B cell (primary cell): ENCODE measurements at regions of chr13 and their contacts with region 1.

Region 1: DNA sequence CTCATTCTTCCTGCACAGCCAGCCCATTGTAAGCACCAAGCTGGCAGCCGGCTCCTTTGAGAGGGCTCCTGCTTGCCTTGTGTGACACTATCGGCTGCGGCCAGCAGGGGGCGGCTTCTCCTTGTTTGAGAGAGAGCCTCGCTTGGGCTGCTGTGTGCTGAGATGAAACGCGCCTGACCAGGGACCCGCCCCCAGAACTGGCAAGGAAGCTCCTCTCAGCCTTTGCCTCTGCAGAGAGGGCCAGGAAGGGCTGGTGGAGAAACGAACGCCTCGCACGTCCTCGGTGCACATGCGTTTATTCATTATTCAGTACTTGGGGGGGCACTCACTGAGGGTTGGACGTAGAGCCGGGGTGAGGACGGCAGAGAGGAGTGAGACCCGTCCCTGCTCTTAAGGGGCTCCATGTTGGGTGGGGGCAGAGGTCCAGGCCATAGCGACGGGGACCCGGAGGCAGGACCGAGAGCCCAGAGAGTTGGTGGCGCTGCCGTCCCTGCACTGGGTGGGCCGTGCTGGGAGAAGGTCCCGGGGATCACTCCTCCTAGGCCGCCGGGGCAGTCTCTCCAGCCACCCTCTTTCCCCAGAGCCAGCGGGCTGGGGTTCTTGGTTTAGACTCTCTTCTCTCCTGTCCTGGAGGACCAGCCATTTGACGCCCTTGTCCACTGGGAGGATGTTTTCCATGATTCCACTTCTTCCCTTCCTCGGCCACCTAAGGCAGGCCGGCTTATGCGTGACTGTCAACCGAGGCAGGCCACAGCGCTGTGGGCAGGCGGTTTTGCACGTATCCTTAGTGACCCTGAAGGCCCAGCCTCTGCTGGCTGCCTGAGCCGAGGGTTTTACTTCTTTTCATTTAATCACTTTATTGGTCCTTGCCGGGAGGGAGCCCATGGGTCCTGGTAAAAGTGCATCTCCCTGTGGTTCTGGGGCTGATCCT is 174.5 kb downstream of the KATNAL1 start:
- DNase-seq: peak; percentile 91
- ATAC-seq: peak; percentile 100
- H3K4me3 ChIP-seq: no peak overlapping the region
- H3K4me3 Mint-ChIP-seq: peak overlapping the region; percentile 69
- H3K27ac ChIP-seq: no peak overlapping the region
- H3K27ac Mint-ChIP-seq: no peak overlapping the region
- H3K4me1 ChIP-seq: peaks cover 4% of the 10 kb centered on the region in 2 donors
- H3K4me1 Mint-ChIP-seq: peaks cover 5% of the 10 kb centered on the region
- H3K27me3 ChIP-seq: no peaks in the 10 kb centered on the region
- H3K27me3 Mint-ChIP-seq: peaks cover under 1% of the 10 kb centered on the region
- CTCF ChIP-seq: peak; percentile 97

Region 2: GRCh38 chr13:30114571-30115256 is 18.2 kb before region 1 on chr13:
- CTCF ChIA-PET with region 1: interaction called, 59 read pairs
- POLR2A ChIA-PET with region 1: no interaction called
- intact Hi-C with region 1: loop called (anchors 2 kb)
- DNase-seq: peak; percentile 92
- ATAC-seq: peak; percentile 93
- H3K4me3 ChIP-seq: peak overlapping the region; percentile 32 to 72 (median 47)
- H3K4me3 Mint-ChIP-seq: peak overlapping the region; percentile 84
- H3K27ac ChIP-seq: no peak overlapping the region
- H3K27ac Mint-ChIP-seq: peak overlapping the region; percentile 66
- H3K4me1 ChIP-seq: peaks cover 6 to 23% of the 10 kb centered on the region in 2 donors
- H3K4me1 Mint-ChIP-seq: peaks cover 28% of the 10 kb centered on the region
- H3K27me3 ChIP-seq: peaks cover 0 to 5% (median 2%) of the 10 kb centered on the region in 4 experiments
- H3K27me3 Mint-ChIP-seq: peaks cover 21% of the 10 kb centered on the region
- CTCF ChIP-seq: peak; percentile 89

Region 3: GRCh38 chr13:30306762-30307193 is 173.9 kb after region 1 on chr13:
- CTCF ChIA-PET with region 1: interaction called, 3 read pairs
- POLR2A ChIA-PET with region 1: no interaction called
- intact Hi-C with region 1: loop called (anchors 5 kb)
- DNase-seq: peak; percentile 96
- ATAC-seq: peak; percentile 89
- H3K4me3 ChIP-seq: peak overlapping the region; percentile 70 to 97 (median 83)
- H3K4me3 Mint-ChIP-seq: peak overlapping the region; percentile 85
- H3K27ac ChIP-seq: peak overlapping the region; percentile 71 to 87
- H3K27ac Mint-ChIP-seq: peak overlapping the region; percentile 86
- H3K4me1 ChIP-seq: peaks cover 28 to 45% of the 10 kb centered on the region in 2 donors
- H3K4me1 Mint-ChIP-seq: peaks cover 55% of the 10 kb centered on the region
- H3K27me3 ChIP-seq: no peaks in the 10 kb centered on the region
- H3K27me3 Mint-ChIP-seq: no peaks in the 10 kb centered on the region
- CTCF ChIP-seq: no peak

Region 4: GRCh38 chr13:30465585-30466357 is 332.9 kb after region 1 on chr13 and contains the start of gene HMGB1:
- CTCF ChIA-PET with region 1: interaction called, 38 read pairs
- POLR2A ChIA-PET with region 1: interaction called, 3 read pairs
- intact Hi-C with region 1: loop called (anchors 1 kb)
- DNase-seq: peak; percentile 97
- ATAC-seq: peak; percentile 82
- H3K4me3 ChIP-seq: peak within 1 kb of the TSS; percentile 21 to 86 (median 78)
- H3K4me3 Mint-ChIP-seq: peak within 1 kb of the TSS; percentile 98
- H3K27ac ChIP-seq: peak within 1 kb of the TSS; percentile 54 to 91
- H3K27ac Mint-ChIP-seq: peak within 1 kb of the TSS; percentile 100
- H3K4me1 ChIP-seq: peaks cover 33 to 38% of the 10 kb centered on the region in 2 donors
- H3K4me1 Mint-ChIP-seq: peaks cover 38% of the 10 kb centered on the region
- H3K27me3 ChIP-seq: no peaks in the 10 kb centered on the region
- H3K27me3 Mint-ChIP-seq: no peaks in the 10 kb centered on the region
- CTCF ChIP-seq: no peak
- total RNA-seq, gene HMGB1: 483 and 529 TPM in 2 replicates

Region 5: GRCh38 chr13:30581582-30581981 is 448.7 kb after region 1 on chr13:
- CTCF ChIA-PET with region 1: interaction called, 49 read pairs
- POLR2A ChIA-PET with region 1: no interaction called
- intact Hi-C with region 1: loop called (anchors 1 kb)
- DNase-seq: peak; percentile 40
- ATAC-seq: no peak
- H3K4me3 ChIP-seq: no peak overlapping the region
- H3K4me3 Mint-ChIP-seq: no peak overlapping the region
- H3K27ac ChIP-seq: no peak overlapping the region
- H3K27ac Mint-ChIP-seq: no peak overlapping the region
- H3K4me1 ChIP-seq: no peaks in the 10 kb centered on the region
- H3K4me1 Mint-ChIP-seq: peaks cover 9% of the 10 kb centered on the region
- H3K27me3 ChIP-seq: peaks cover 0 to 3% (median 0%) of the 10 kb centered on the region in 4 experiments
- H3K27me3 Mint-ChIP-seq: no peaks in the 10 kb centered on the region
- CTCF ChIP-seq: no peak

Region 6: DNA sequence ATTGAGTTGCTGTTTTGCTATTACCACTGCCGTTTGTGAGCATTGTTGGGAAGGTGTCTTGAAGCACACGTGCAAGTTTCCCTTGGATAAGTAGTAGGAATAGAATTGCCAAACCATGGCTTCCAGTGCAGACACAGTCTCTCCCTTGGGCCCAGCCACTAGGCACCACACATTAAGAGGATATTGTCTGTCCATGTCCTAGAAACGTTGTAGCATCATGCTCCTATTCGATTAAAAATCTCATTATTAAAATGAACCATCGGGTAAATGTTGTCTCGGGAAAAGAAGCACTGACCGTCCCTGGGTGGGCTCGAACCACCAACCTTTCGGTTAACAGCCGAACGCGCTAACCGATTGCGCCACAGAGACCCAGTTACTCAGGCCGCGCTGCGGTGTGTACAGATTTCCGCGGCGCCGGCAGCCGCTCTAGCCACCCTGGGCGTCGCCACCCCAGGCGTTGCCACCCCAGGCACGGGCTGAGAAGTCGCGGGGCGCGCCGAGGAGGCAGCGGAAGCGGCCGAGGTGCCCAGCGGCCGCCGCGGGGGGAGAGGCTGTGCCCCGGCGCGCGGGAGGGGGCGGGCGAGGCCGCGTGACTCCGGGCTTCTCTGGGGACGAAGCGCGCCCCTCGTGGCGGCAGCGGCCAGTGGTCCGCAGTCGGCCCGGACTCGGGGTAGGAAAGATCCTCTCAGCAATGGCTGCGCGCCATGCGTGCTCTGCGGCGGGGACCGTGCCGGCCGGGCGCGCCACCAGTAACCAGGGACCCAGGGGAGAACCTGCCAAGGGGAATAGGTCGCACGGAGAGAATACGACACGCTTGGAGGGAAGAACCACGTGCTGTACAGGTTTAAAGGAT is 541.0 kb after region 1 on chr13:
- CTCF ChIA-PET with region 1: interaction called, 7 read pairs
- POLR2A ChIA-PET with region 1: no interaction called
- intact Hi-C with region 1: loop called (anchors 10 kb)
- DNase-seq: peak; percentile 97
- ATAC-seq: peak; percentile 92
- H3K4me3 ChIP-seq: peak overlapping the region; percentile 52 to 73 (median 65)
- H3K4me3 Mint-ChIP-seq: peak overlapping the region; percentile 97
- H3K27ac ChIP-seq: peak overlapping the region; percentile 47 to 57
- H3K27ac Mint-ChIP-seq: peak overlapping the region; percentile 99
- H3K4me1 ChIP-seq: peaks cover 8 to 19% of the 10 kb centered on the region in 2 donors
- H3K4me1 Mint-ChIP-seq: peaks cover 30% of the 10 kb centered on the region
- H3K27me3 ChIP-seq: no peaks in the 10 kb centered on the region
- H3K27me3 Mint-ChIP-seq: no peaks in the 10 kb centered on the region
- CTCF ChIP-seq: peak; percentile 73

Region 7: GRCh38 chr13:30865123-30866049 is 732.5 kb after region 1 on chr13:
- CTCF ChIA-PET with region 1: interaction called, 53 read pairs
- POLR2A ChIA-PET with region 1: no interaction called
- intact Hi-C with region 1: no loop called
- DNase-seq: peak; percentile 66
- ATAC-seq: peak; percentile 97
- H3K4me3 ChIP-seq: no peak overlapping the region
- H3K4me3 Mint-ChIP-seq: no peak overlapping the region
- H3K27ac ChIP-seq: no peak overlapping the region
- H3K27ac Mint-ChIP-seq: no peak overlapping the region
- H3K4me1 ChIP-seq: peaks cover 0 to 2% of the 10 kb centered on the region in 2 donors
- H3K4me1 Mint-ChIP-seq: peaks cover 2% of the 10 kb centered on the region
- H3K27me3 ChIP-seq: peaks cover 0 to 10% (median 2%) of the 10 kb centered on the region in 4 experiments
- H3K27me3 Mint-ChIP-seq: peaks cover 15% of the 10 kb centered on the region
- CTCF ChIP-seq: peak; percentile 94